CD4-positive, alpha-beta T cell (primary cell): ENCODE measurements at regions of chr11 and their contacts with region 1.

Region 1: GRCh38 chr11:65471410-65471762 is 27.5 kb upstream of the MALAT1 start:
- DNase-seq: peak in 5 of 14 experiments; percentile 15 to 64 (median 32)
- ATAC-seq: no peak
- H3K4me3 ChIP-seq: peak overlapping the region; percentile 3
- H3K4me3 Mint-ChIP-seq: no peak overlapping the region
- H3K27ac ChIP-seq: peak overlapping the region; percentile 72 to 76
- H3K27ac Mint-ChIP-seq: peak overlapping the region; percentile 92
- H3K4me1 ChIP-seq: peaks cover 26% of the 10 kb centered on the region
- H3K4me1 Mint-ChIP-seq: peaks cover 16% of the 10 kb centered on the region
- H3K27me3 ChIP-seq: no peaks in the 10 kb centered on the region
- H3K27me3 Mint-ChIP-seq: no peaks in the 10 kb centered on the region
- CTCF ChIP-seq: no peak

Region 2: GRCh38 chr11:65180877-65181568 is 290.4 kb before region 1 on chr11:
- CTCF ChIA-PET with region 1: no interaction called
- POLR2A ChIA-PET with region 1: no interaction called
- intact Hi-C with region 1: no loop called
- DNase-seq: peak; percentile 22 to 80 (median 45)
- ATAC-seq: peak; percentile 67
- H3K4me3 ChIP-seq: peak overlapping the region; percentile 97
- H3K4me3 Mint-ChIP-seq: peak overlapping the region; percentile 94
- H3K27ac ChIP-seq: no peak overlapping the region
- H3K27ac Mint-ChIP-seq: peak overlapping the region; percentile 83
- H3K4me1 ChIP-seq: peaks cover 37% of the 10 kb centered on the region
- H3K4me1 Mint-ChIP-seq: peaks cover 12% of the 10 kb centered on the region
- H3K27me3 ChIP-seq: no peaks in the 10 kb centered on the region
- H3K27me3 Mint-ChIP-seq: no peaks in the 10 kb centered on the region
- CTCF ChIP-seq: peak; percentile 65

Region 3: GRCh38 chr11:65425105-65425970 is 46.0 kb before region 1 on chr11:
- CTCF ChIA-PET with region 1: interaction called, 6 read pairs
- POLR2A ChIA-PET with region 1: interaction called, 110 read pairs
- intact Hi-C with region 1: loop called in 1 of 2 experiments (anchors 2 kb)
- DNase-seq: peak; percentile 69 to 97 (median 80)
- ATAC-seq: peak; percentile 56
- H3K4me3 ChIP-seq: peak overlapping the region; percentile 86
- H3K4me3 Mint-ChIP-seq: peak overlapping the region; percentile 92
- H3K27ac ChIP-seq: peak overlapping the region; percentile 99
- H3K27ac Mint-ChIP-seq: peak overlapping the region; percentile 96
- H3K4me1 ChIP-seq: peaks cover 58% of the 10 kb centered on the region
- H3K4me1 Mint-ChIP-seq: peaks cover 70% of the 10 kb centered on the region
- H3K27me3 ChIP-seq: no peaks in the 10 kb centered on the region
- H3K27me3 Mint-ChIP-seq: no peaks in the 10 kb centered on the region
- CTCF ChIP-seq: peak; percentile 31

Region 4: DNA sequence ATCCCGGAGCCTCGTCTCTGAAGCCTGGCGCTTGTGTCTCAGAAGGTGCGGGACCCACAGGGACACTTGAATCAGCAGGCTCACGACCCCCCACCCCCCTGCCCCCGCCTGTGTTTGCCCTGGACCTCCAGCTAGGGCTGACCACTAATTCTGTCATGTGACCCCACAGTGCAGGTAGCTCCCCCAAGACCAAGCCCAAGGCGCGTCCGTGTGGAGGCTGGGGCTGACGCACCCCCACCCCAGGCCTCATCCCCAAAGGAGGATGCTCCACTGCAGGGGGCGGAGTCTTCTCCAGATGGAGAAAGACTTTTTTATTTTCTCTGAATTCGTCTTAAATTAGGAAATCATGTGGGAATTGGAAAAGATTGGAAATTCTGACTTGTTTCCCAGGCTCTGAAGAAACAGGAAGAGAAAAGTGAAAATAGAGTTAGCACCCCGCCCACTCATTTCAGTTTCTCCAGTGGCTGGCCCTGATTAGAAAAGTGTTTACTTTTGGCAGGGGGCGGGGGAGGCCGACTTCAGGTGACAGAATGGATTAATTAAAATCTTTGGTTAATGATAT is 192.3 kb after region 1 on chr11:
- CTCF ChIA-PET with region 1: no interaction called
- POLR2A ChIA-PET with region 1: no interaction called
- intact Hi-C with region 1: no loop called
- DNase-seq: peak in 8 of 14 experiments; percentile 24 to 67 (median 44)
- ATAC-seq: peak; percentile 28
- H3K4me3 ChIP-seq: peak overlapping the region; percentile 71
- H3K4me3 Mint-ChIP-seq: peak overlapping the region; percentile 92
- H3K27ac ChIP-seq: peak overlapping the region; percentile 96 to 97
- H3K27ac Mint-ChIP-seq: peak overlapping the region; percentile 94
- H3K4me1 ChIP-seq: peaks cover 52% of the 10 kb centered on the region
- H3K4me1 Mint-ChIP-seq: peaks cover 29% of the 10 kb centered on the region
- H3K27me3 ChIP-seq: no peaks in the 10 kb centered on the region
- H3K27me3 Mint-ChIP-seq: no peaks in the 10 kb centered on the region
- CTCF ChIP-seq: no peak

Region 5: GRCh38 chr11:65973439-65974110 is 502.2 kb after region 1 on chr11:
- CTCF ChIA-PET with region 1: no interaction called
- POLR2A ChIA-PET with region 1: no interaction called
- intact Hi-C with region 1: no loop called
- DNase-seq: no peak
- ATAC-seq: no peak
- H3K4me3 ChIP-seq: no peak overlapping the region
- H3K4me3 Mint-ChIP-seq: no peak overlapping the region
- H3K27ac ChIP-seq: no peak overlapping the region
- H3K27ac Mint-ChIP-seq: no peak overlapping the region
- H3K4me1 ChIP-seq: no peaks in the 10 kb centered on the region
- H3K4me1 Mint-ChIP-seq: no peaks in the 10 kb centered on the region
- H3K27me3 ChIP-seq: no peaks in the 10 kb centered on the region
- H3K27me3 Mint-ChIP-seq: no peaks in the 10 kb centered on the region
- CTCF ChIP-seq: no peak